Caco-2 (cell line): ENCODE measurements at regions of chr19 and their contacts with region 1.

Region 1: GRCh38 chr19:19063183-19064097 is at the start of gene SLC25A42:
- DNase-seq: peak; percentile 99
- H3K4me3 ChIP-seq: peak within 1 kb of the TSS; percentile 64
- H3K4me3 Mint-ChIP-seq: peak within 1 kb of the TSS; percentile 83
- H3K27ac Mint-ChIP-seq: peak within 1 kb of the TSS; percentile 66
- H3K4me1 ChIP-seq: peaks cover 11% of the 10 kb centered on the region
- H3K4me1 Mint-ChIP-seq: no peaks in the 10 kb centered on the region
- H3K27me3 ChIP-seq: no peaks in the 10 kb centered on the region
- H3K27me3 Mint-ChIP-seq: no peaks in the 10 kb centered on the region
- CTCF ChIP-seq: no peak
- total RNA-seq, gene SLC25A42: 4.5 and 5.4 TPM in 2 replicates

Region 2: GRCh38 chr19:18961767-18962620 is 101.4 kb before region 1 on chr19:
- CTCF ChIA-PET with region 1: no interaction called
- POLR2A ChIA-PET with region 1: no interaction called
- intact Hi-C with region 1: no loop called
- DNase-seq: peak; percentile 49 to 65
- H3K4me3 ChIP-seq: no peak overlapping the region
- H3K4me3 Mint-ChIP-seq: no peak overlapping the region
- H3K27ac Mint-ChIP-seq: no peak overlapping the region
- H3K4me1 ChIP-seq: no peaks in the 10 kb centered on the region
- H3K4me1 Mint-ChIP-seq: peaks cover 7% of the 10 kb centered on the region
- H3K27me3 ChIP-seq: no peaks in the 10 kb centered on the region
- H3K27me3 Mint-ChIP-seq: peaks cover 2% of the 10 kb centered on the region
- CTCF ChIP-seq: no peak

Region 3: GRCh38 chr19:18985257-18985656 is 78.2 kb before region 1 on chr19:
- CTCF ChIA-PET with region 1: no interaction called
- POLR2A ChIA-PET with region 1: no interaction called
- intact Hi-C with region 1: no loop called
- DNase-seq: no peak
- H3K4me3 ChIP-seq: no peak overlapping the region
- H3K4me3 Mint-ChIP-seq: no peak overlapping the region
- H3K27ac Mint-ChIP-seq: no peak overlapping the region
- H3K4me1 ChIP-seq: no peaks in the 10 kb centered on the region
- H3K4me1 Mint-ChIP-seq: no peaks in the 10 kb centered on the region
- H3K27me3 ChIP-seq: no peaks in the 10 kb centered on the region
- H3K27me3 Mint-ChIP-seq: no peaks in the 10 kb centered on the region
- CTCF ChIP-seq: no peak

Region 4: DNA sequence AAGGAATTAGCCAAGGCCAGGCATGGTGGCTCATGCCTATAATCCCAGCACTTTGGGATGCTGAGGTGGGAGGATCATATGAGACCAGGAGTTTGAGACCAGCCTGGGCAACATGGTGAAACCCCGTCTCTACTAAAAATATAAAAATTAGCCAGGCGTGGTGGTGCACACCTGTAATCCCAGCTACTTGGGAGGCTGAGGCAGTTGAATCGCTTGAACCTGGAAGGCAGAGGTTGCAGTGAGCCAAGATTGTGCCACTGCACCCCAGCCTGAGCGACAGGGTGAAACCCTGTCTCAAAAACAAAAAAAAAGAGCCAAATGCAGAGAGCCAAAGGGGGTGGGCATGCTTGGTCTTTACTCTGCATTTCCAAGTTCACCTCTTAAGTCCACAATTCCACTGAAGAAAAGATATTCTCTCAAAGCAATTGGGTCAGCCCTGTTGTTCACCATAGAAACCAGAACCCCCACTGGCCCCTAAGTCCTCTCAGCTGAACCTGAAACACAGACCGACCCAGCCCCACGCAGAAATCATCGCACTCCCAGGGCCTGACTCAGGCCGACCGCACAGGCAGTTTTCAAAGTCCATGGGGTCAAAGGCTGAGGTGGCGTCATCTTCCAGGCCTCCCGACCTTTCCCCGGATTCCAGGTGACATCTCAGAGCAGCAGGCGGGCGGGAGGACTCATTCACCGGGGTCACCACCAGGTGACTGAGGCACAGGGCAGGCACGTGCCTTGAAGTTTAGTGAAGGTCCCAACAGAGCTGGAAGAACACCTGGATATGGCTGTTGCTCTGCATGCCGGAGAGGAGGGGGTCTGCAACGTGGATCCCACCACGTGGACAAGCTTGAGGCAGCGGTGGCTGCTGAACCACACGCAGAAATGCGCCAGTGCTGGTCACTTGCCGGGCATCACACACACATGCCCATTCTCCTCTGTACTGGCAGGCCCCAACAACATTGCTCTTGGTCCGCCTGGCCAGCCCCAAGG is 33.5 kb after region 1 on chr19:
- CTCF ChIA-PET with region 1: no interaction called
- POLR2A ChIA-PET with region 1: no interaction called
- intact Hi-C with region 1: loop called (anchors 1 kb)
- DNase-seq: peak; percentile 91 to 95
- H3K4me3 ChIP-seq: no peak overlapping the region
- H3K4me3 Mint-ChIP-seq: peak overlapping the region; percentile 51
- H3K27ac Mint-ChIP-seq: peak overlapping the region; percentile 92
- H3K4me1 ChIP-seq: peaks cover 48% of the 10 kb centered on the region
- H3K4me1 Mint-ChIP-seq: peaks cover 14% of the 10 kb centered on the region
- H3K27me3 ChIP-seq: no peaks in the 10 kb centered on the region
- H3K27me3 Mint-ChIP-seq: no peaks in the 10 kb centered on the region
- CTCF ChIP-seq: peak; percentile 12 to 20

Region 5: DNA sequence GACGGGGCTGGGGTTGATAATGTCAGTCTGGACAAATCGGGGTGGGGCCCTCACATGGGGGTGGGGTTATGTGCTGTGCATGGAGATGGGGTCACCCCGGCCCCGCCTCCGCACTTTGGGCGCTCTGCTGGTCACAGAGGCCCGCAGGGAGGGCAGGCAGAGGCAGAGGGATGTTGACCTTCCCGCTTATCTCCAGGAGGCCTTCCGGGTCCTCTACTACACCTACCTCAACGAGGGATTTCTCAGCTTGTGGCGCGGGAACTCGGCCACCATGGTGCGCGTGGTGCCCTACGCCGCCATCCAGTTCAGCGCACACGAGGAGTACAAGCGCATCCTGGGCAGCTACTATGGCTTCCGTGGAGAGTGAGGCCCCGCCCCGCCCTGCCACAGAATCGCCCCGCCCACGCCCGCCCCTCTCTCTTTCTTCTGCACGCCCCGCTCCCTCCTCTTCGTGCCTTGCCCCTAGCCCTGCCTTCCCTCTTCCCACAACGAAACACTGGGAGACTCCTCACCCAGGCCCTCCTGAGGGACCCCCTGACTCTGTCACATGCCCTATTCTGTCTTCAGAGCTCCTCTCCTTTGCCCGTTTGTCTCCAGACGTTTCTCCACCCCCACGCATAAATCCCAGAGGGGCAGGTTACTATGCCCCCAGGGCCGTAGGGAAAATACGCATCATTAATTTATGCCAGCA is 42.1 kb after region 1 on chr19:
- CTCF ChIA-PET with region 1: interaction called, 3 read pairs
- POLR2A ChIA-PET with region 1: no interaction called
- intact Hi-C with region 1: loop called (anchors 2 kb)
- DNase-seq: peak; percentile 68 to 76
- H3K4me3 ChIP-seq: peak overlapping the region; percentile 52
- H3K4me3 Mint-ChIP-seq: peak overlapping the region; percentile 78
- H3K27ac Mint-ChIP-seq: peak overlapping the region; percentile 60
- H3K4me1 ChIP-seq: peaks cover 16% of the 10 kb centered on the region
- H3K4me1 Mint-ChIP-seq: no peaks in the 10 kb centered on the region
- H3K27me3 ChIP-seq: no peaks in the 10 kb centered on the region
- H3K27me3 Mint-ChIP-seq: no peaks in the 10 kb centered on the region
- CTCF ChIP-seq: no peak

Region 6: DNA sequence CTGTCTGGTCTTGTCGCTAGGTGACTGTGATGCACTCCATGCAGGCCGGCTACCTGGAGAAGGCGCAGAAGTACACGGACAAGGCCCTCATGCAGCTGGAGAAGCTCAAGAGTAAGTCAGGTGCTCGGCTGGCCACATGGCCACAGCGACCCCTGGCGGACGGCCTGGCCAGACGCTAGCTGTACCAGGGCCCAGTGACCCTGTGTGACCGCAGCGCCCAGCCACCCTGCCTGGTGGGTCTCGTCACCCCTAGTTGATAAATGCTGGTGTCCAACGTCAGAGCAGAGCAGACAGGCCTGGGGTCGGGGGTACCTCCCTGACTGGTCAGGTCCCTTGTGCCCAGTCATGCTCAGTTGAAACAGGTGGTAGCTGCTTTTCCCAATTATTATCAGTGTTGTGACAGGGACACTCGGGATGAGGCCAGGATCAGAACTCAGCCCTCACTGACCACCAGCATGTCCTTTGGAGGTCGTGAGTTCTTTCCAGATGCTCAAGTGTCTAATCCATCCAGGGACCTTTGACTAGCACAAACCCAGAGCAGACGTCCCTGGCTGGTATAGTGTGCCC is 279.4 kb after region 1 on chr19:
- CTCF ChIA-PET with region 1: no interaction called
- POLR2A ChIA-PET with region 1: no interaction called
- intact Hi-C with region 1: no loop called
- DNase-seq: peak; percentile 69 to 85
- H3K4me3 ChIP-seq: no peak overlapping the region
- H3K4me3 Mint-ChIP-seq: no peak overlapping the region
- H3K27ac Mint-ChIP-seq: no peak overlapping the region
- H3K4me1 ChIP-seq: no peaks in the 10 kb centered on the region
- H3K4me1 Mint-ChIP-seq: no peaks in the 10 kb centered on the region
- H3K27me3 ChIP-seq: no peaks in the 10 kb centered on the region
- H3K27me3 Mint-ChIP-seq: no peaks in the 10 kb centered on the region
- CTCF ChIP-seq: peak; percentile 80 to 87